Calu3 (cell line): ENCODE measurements at regions of chr7 and their contacts with region 1.

Region 1: GRCh38 chr7:37284805-37285231 is 163.8 kb downstream of the ELMO1 start:
- DNase-seq: peak; percentile 63
- H3K4me3 Mint-ChIP-seq: no peak overlapping the region
- H3K27ac Mint-ChIP-seq: no peak overlapping the region
- H3K4me1 Mint-ChIP-seq: no peaks in the 10 kb centered on the region
- H3K27me3 Mint-ChIP-seq: peaks cover 20% of the 10 kb centered on the region
- CTCF ChIP-seq: peak; percentile 53

Region 2: DNA sequence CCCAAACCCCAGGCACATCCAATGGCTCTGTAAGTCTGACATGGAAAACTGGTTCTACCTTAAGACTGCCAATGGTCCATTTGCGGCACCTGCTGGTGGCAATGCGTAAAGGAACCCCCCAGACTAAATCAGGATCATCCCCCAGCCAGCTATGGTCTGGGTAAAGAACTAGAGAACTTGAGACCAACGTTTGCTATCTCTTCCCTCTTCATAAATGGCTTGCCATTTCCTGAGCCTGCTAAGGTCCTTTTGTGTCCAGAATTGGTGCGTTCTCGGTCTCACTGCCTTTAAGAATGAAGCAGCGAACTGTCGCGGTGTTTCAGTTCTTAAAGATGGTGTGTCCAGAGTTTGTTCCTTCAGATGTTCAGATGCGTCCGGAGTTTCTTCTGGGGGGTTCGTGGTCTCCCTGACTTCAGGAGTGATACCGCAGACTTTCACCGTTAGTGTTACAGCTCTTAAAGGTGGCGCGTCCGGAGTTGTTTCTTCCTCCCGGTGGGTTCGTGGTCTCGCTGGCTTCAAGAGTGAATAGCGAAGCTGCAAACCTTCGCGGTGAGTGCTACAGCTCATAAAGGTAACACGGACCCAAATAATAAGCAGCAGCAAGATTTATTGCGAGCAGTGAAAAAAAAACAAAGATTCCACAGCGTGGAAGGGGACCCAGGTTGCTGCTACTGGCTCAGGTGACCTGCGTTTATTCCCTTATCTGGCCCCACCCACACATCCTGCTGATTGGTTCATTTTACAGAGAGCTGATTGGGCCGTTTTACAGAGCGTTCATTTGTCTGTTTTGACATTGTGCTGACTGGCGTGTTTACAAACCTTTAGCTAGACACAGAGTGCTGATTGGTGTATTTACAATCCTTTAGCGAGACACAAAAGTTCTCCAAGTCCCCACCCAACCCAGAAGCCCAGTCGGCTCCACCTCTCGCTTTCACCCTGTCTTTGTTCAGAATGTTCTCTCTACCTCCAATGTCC is 68.4 kb after region 1 on chr7:
- CTCF ChIA-PET with region 1: interaction called, 3 read pairs
- intact Hi-C with region 1: loop called (anchors 2 kb)
- DNase-seq: peak; percentile 61
- H3K4me3 Mint-ChIP-seq: no peak overlapping the region
- H3K27ac Mint-ChIP-seq: no peak overlapping the region
- H3K4me1 Mint-ChIP-seq: no peaks in the 10 kb centered on the region
- H3K27me3 Mint-ChIP-seq: no peaks in the 10 kb centered on the region
- CTCF ChIP-seq: peak; percentile 53

Region 3: GRCh38 chr7:37495574-37496184 is 210.9 kb after region 1 on chr7:
- CTCF ChIA-PET with region 1: no interaction called
- intact Hi-C with region 1: loop called (anchors 5 kb)
- DNase-seq: no peak
- H3K4me3 Mint-ChIP-seq: no peak overlapping the region
- H3K27ac Mint-ChIP-seq: no peak overlapping the region
- H3K4me1 Mint-ChIP-seq: no peaks in the 10 kb centered on the region
- H3K27me3 Mint-ChIP-seq: no peaks in the 10 kb centered on the region
- CTCF ChIP-seq: peak; percentile 61